ENCODE measurements at regions of chr11 and their contacts with region 1.

Region 1: GRCh38 chr11:61816736-61817455 is at the start of gene FADS1:
- DNase-seq: peak; percentile 97
- ATAC-seq: peak; percentile 44
- H3K4me3 ChIP-seq: peak within 1 kb of the TSS; percentile 78
- H3K27ac ChIP-seq: peak within 1 kb of the TSS; percentile 86
- H3K4me1 ChIP-seq: peaks cover 46% of the 10 kb centered on the region
- H3K27me3 ChIP-seq: no peaks in the 10 kb centered on the region
- CTCF ChIP-seq: peak; percentile 69
- total RNA-seq, gene FADS1: 79.4 and 84.4 TPM in 2 replicates

Region 2: DNA sequence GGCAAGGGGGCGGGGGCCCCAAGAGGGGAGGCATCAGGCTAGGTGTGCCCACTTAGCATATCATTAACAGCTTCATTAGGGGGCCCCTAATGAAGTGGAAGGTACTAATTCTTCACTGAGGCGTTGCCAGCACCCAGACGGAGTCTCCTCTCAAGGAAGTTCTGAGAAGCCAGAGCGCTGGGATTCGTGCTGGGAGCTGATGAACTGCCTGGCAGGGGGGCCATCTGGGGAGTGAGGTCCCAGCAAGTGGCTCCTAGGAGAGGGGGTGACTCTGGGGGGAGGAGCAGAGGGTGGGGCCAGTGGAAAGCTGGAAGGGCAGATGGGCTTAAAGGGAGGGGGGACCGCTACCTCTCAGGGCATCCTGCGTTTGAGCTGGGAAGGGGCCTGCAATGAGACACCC is 106.9 kb before region 1 on chr11:
- CTCF ChIA-PET with region 1: no interaction called
- POLR2A ChIA-PET with region 1: interaction called, 10 read pairs
- intact Hi-C with region 1: no loop called
- DNase-seq: no peak
- ATAC-seq: no peak
- H3K4me3 ChIP-seq: no peak overlapping the region
- H3K27ac ChIP-seq: no peak overlapping the region
- H3K4me1 ChIP-seq: peaks cover 7% of the 10 kb centered on the region
- H3K27me3 ChIP-seq: no peaks in the 10 kb centered on the region
- CTCF ChIP-seq: no peak

Region 3: DNA sequence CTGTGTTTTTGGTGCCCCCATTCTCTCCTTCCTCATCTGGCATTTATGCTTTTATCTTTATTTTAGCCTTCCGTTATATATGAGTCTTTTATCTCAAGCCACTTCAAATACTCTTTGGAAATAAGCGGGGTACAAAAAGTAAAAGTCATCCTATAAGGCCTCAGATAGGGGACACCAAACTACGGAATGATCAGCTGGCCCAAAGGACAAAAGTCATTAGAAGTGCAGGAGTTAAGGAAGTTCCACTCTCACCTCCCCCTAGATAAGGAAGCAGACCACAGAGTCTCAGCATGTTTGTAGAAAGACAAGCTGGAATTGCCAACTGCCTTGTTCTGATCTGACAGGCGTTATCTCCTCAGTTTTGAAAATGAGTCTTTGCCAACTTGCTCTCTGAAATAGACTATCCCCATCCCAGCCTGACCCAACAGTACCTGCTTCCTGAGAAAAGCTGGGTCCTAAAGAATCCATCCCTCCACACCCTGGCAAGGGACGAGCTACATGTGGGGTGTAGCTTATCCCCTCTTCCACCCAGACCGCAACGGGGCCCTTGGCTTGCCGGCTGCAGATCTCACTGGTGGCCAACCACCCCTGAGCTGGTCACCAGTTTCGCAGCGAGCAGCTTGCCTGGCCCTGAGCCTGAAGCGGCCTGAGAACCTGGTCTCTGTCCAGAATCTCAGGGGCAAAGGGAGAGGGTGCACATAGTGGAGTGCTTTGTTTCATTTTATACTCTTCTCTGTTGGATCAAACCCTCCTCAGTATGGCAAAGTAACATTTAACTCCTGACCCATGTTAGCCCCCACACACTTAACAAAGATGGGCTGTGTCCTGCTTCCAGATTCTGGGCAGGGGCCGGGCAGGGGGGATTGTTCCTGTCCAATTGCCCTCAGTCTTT is 25.0 kb after region 1 on chr11:
- CTCF ChIA-PET with region 1: no interaction called
- POLR2A ChIA-PET with region 1: no interaction called
- intact Hi-C with region 1: no loop called
- DNase-seq: no peak
- ATAC-seq: no peak; the same call in 1 of the 2 replicates
- H3K4me3 ChIP-seq: no peak overlapping the region
- H3K27ac ChIP-seq: no peak overlapping the region
- H3K4me1 ChIP-seq: no peaks in the 10 kb centered on the region
- H3K27me3 ChIP-seq: no peaks in the 10 kb centered on the region
- CTCF ChIP-seq: no peak

Region 4: DNA sequence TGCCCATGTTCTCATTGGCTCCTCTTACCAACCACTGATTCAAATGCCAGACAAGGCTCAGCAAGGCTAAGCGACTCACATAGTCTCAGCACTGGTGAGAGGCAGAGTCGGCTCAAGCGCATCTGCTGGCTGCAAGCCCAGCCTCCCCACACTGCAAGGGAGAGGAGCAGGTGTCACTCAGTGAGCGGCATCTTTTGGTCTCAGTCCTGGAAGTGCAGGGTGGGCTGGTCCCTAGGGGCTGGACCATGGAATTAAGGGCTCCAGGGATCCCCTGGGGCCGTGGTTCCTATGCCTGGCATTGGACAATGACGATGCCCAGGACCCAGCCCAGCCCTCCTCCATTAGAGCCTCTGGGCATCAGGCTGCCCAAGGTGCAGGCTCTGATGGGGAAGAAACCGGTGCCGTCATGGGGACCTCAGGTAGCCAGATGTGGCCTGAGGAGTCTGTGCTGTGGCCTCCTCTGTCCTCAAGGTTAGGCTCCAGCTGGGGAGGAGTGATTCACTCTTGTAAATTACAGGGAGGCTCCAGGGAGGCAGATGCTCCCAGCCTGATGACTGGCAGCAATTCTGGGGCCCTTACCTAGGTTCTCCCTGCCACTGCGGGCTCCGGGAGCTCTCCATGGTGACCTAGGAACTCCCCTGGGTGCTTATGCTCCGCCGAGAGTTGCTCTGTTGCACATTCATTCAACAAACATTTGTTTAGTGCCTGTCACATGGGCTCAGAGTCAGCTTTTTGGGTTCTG is 39.2 kb after region 1 on chr11:
- CTCF ChIA-PET with region 1: no interaction called
- POLR2A ChIA-PET with region 1: no interaction called
- intact Hi-C with region 1: no loop called
- DNase-seq: no peak
- ATAC-seq: peak; percentile 42
- H3K4me3 ChIP-seq: no peak overlapping the region
- H3K27ac ChIP-seq: no peak overlapping the region
- H3K4me1 ChIP-seq: no peaks in the 10 kb centered on the region
- H3K27me3 ChIP-seq: no peaks in the 10 kb centered on the region
- CTCF ChIP-seq: no peak

Region 5: DNA sequence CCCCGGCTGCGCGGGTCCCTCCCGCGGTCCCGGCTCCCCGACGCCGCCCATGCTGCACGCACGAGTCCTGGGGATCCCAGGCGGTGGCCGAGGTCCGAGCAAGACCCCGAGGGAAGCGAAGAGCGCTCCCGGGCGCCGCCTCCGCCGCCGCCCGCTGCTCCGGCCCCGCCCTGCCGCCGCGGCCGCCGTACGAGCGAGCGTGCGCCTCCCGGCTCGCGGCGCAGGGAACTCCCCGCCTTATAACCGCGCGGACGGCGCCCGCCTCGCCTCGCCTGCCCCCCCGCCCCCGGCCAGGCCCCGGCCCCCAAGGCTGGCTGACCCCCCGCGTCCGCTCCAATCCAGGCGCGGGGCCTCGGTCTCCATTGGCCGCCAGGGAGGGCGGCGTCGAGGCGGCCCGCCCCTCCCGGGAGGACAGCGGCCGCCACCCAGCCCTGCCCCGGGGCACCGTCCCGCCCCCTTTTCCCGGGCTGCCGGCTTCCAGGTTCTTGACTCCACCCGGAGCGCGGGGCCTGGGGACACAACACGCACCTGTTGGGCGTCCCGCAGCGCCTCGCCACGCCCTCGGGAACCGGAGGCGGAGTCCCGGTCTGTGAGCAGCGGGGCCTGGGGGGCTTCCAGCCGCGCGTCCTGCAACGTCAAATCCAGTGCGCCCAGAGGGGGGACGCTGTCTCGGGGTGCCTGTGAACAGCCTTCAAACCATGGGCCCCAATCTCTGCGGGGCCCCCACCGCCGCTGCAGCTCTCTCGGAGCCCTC is 74.6 kb after region 1 on chr11 and contains the start of gene FADS3:
- CTCF ChIA-PET with region 1: no interaction called
- POLR2A ChIA-PET with region 1: no interaction called
- intact Hi-C with region 1: loop called (anchors 5 kb)
- DNase-seq: peak; percentile 96
- ATAC-seq: peak; percentile 83
- H3K4me3 ChIP-seq: peak within 1 kb of the TSS; percentile 91
- H3K27ac ChIP-seq: no peak within 1 kb of the TSS
- H3K4me1 ChIP-seq: peaks cover 12% of the 10 kb centered on the region
- H3K27me3 ChIP-seq: no peaks in the 10 kb centered on the region
- CTCF ChIP-seq: peak; percentile 0; the same call in 1 of the 2 replicates
- total RNA-seq, gene FADS3: 67.9 and 119 TPM in 2 replicates

Measured in PC-3 (cell line).